ENCODE measurements at regions of chr1 and their contacts with region 1.

Region 1: DNA sequence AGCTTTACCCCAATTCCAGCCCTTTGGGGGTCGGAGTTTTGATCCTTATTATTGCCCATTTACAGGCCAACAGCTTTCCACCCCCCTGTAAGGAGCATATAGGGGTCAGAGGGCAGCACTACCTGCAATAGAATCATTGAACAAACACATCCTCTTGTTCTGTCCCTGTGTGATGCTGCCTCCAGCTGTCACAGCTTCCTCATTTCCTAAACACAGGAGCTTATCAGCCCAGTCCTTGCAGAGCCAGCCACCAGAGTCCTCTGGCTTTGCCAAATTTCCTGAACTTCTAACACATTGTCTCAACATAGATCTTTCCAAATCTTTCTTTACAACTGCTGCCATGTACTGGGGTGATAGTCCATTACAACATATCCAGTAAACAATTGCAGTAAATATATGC is 32.8 kb upstream of the PTBP2 start:
- DNase-seq: no peak
- H3K4me3 ChIP-seq: no peak overlapping the region
- H3K27ac ChIP-seq: no peak overlapping the region
- H3K4me1 ChIP-seq: no peaks in the 10 kb centered on the region
- H3K27me3 ChIP-seq: no peaks in the 10 kb centered on the region
- CTCF ChIP-seq: no peak

Region 2: GRCh38 chr1:96674911-96675310 is 13.9 kb before region 1 on chr1:
- intact Hi-C with region 1: no loop called
- DNase-seq: no peak
- H3K4me3 ChIP-seq: no peak overlapping the region
- H3K27ac ChIP-seq: no peak overlapping the region
- H3K4me1 ChIP-seq: no peaks in the 10 kb centered on the region
- H3K27me3 ChIP-seq: no peaks in the 10 kb centered on the region
- CTCF ChIP-seq: no peak

Region 3: GRCh38 chr1:96703186-96703585 is 14.4 kb after region 1 on chr1:
- intact Hi-C with region 1: loop called (anchors 1 kb)
- DNase-seq: no peak
- H3K4me3 ChIP-seq: no peak overlapping the region
- H3K27ac ChIP-seq: no peak overlapping the region
- H3K4me1 ChIP-seq: no peaks in the 10 kb centered on the region
- H3K27me3 ChIP-seq: no peaks in the 10 kb centered on the region
- CTCF ChIP-seq: no peak

Region 4: DNA sequence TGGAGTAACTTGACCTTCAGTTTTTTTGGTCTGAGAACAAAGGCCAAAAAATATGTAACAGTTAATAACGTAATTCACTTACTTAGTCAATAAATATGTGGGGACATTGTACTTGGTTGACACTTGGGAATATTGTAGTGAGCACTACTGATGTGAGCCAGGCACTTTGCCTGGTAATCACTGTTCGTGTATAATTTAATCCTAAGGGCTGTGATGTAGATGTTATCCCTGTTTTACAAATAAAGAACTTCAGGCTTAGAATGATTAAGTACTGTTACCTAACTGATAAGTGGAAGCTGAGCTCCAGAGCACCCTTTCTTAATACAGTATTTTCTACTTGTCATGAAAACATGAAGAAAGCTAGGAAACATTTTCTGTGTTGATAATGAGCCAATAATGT is 60.9 kb after region 1 on chr1:
- intact Hi-C with region 1: loop called (anchors 2 kb)
- DNase-seq: no peak
- H3K4me3 ChIP-seq: no peak overlapping the region
- H3K27ac ChIP-seq: no peak overlapping the region
- H3K4me1 ChIP-seq: no peaks in the 10 kb centered on the region
- H3K27me3 ChIP-seq: no peaks in the 10 kb centered on the region
- CTCF ChIP-seq: no peak

Measured in ascending aorta (tissue), 2 donors.